Spleen (tissue), 13 donors: ENCODE measurements at regions of chr4 and their contacts with region 1.

Region 1: GRCh38 chr4:3201718-3202702 is 46.9 kb upstream of the MSANTD1 start:
- DNase-seq: no peak
- H3K4me3 ChIP-seq: peak overlapping the region in 1 of 8 donors; percentile 19
- H3K27ac ChIP-seq: peak overlapping the region; percentile 18 to 82 (median 76)
- H3K4me1 ChIP-seq: peaks cover 13 to 62% (median 30%) of the 10 kb centered on the region in 6 donors
- H3K27me3 ChIP-seq: no peaks in the 10 kb centered on the region
- CTCF ChIP-seq: no peak
- POLR2A ChIP-seq: no peak

Region 2: GRCh38 chr4:3285558-3286334 is 83.7 kb after region 1 on chr4:
- intact Hi-C with region 1: loop called (anchors 10 kb)
- DNase-seq: peak; percentile 85
- H3K4me3 ChIP-seq: peak overlapping the region in 1 of 8 donors; percentile 33
- H3K27ac ChIP-seq: no peak overlapping the region
- H3K4me1 ChIP-seq: peaks cover 9 to 33% (median 21%) of the 10 kb centered on the region in 6 donors
- H3K27me3 ChIP-seq: peaks cover 0 to 61% (median 0%) of the 10 kb centered on the region in 7 donors
- CTCF ChIP-seq: no peak
- POLR2A ChIP-seq: no peak

Region 3: GRCh38 chr4:3399277-3400194 is 197.5 kb after region 1 on chr4:
- intact Hi-C with region 1: no loop called
- DNase-seq: no peak
- H3K4me3 ChIP-seq: no peak overlapping the region
- H3K27ac ChIP-seq: no peak overlapping the region
- H3K4me1 ChIP-seq: peaks cover 0 to 17% (median 4%) of the 10 kb centered on the region in 6 donors
- H3K27me3 ChIP-seq: no peaks in the 10 kb centered on the region
- CTCF ChIP-seq: no peak
- POLR2A ChIP-seq: no peak